Heart left ventricle (tissue), 16 donors: ENCODE measurements at regions of chr1 and their contacts with region 1.

Region 1: GRCh38 chr1:43358746-43359693 is at the start of gene CDC20:
- DNase-seq: peak; percentile 98 to 99 (median 99)
- ATAC-seq: peak; percentile 98 to 100 (median 99)
- H3K4me3 ChIP-seq: peak within 1 kb of the TSS; percentile 38 to 92 (median 70)
- H3K27ac ChIP-seq: peak within 1 kb of the TSS; percentile 85 to 98 (median 94)
- H3K4me1 ChIP-seq: peaks cover 0 to 21% (median 11%) of the 10 kb centered on the region in 12 donors
- H3K27me3 ChIP-seq: no peaks in the 10 kb centered on the region
- CTCF ChIP-seq: no peak
- POLR2A ChIP-seq: no peak
- total RNA-seq, gene CDC20: 0.45 to 16.9 (median 1.5) TPM

Region 2: DNA sequence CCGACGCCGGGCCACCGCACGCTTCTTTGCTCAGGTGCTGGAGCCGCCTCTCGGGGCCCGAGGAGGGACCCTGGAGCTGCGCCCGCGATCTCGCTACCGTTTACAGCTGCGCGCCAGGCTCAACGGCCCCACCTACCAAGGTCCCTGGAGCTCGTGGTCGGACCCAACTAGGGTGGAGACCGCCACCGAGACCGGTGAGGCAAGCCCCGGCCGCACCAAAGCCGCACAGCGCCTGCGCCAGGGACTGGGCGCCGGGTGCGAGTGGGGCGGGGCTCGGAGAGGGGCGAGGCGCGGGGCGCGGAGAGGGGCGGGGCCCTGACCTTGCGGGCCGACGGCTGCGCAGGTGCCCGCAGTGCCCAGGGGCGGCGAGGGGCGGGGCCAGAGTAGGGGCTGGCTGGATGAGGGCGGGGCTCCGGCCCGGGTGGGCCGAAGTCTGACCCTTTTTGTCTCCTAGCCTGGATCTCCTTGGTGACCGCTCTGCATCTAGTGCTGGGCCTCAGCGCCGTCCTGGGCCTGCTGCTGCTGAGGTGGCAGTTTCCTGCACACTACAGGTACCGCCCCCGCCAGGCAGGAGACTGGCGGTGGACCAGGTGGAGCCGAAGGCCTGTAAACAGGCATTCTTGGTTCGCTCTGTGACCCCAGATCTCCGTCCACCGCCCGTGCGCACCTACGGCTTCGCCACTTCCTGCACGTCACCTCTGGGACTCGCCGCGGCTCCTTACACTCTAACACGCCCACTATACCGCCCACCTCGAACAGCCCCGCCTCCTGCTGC is 10.0 kb before region 1 on chr1:
- intact Hi-C with region 1: loop called in 1 of 10 experiments (anchors 1 kb)
- DNase-seq: peak; percentile 85 to 90 (median 90)
- ATAC-seq: peak; percentile 86 to 92 (median 89)
- H3K4me3 ChIP-seq: peak overlapping the region; percentile 34 to 90 (median 60)
- H3K27ac ChIP-seq: peak overlapping the region; percentile 78 to 100 (median 96)
- H3K4me1 ChIP-seq: peaks cover 0 to 54% (median 25%) of the 10 kb centered on the region in 12 donors
- H3K27me3 ChIP-seq: no peaks in the 10 kb centered on the region
- CTCF ChIP-seq: no peak
- POLR2A ChIP-seq: peak in 1 of 2 donors; percentile 46